Calu3 (cell line): ENCODE measurements at regions of chr1 and their contacts with region 1.

Region 1: GRCh38 chr1:116570358-116571200 is at the start of gene CD58:
- DNase-seq: peak; percentile 82
- H3K4me3 Mint-ChIP-seq: peak within 1 kb of the TSS; percentile 87
- H3K27ac Mint-ChIP-seq: peak within 1 kb of the TSS; percentile 95
- H3K4me1 Mint-ChIP-seq: peaks cover 52% of the 10 kb centered on the region
- H3K27me3 Mint-ChIP-seq: no peaks in the 10 kb centered on the region
- CTCF ChIP-seq: peak; percentile 44
- total RNA-seq, gene CD58: 18.9 and 22.9 TPM in 2 replicates

Region 2: GRCh38 chr1:116504308-116505156 is 66.0 kb before region 1 on chr1:
- CTCF ChIA-PET with region 1: no interaction called
- intact Hi-C with region 1: loop called (anchors 5 kb)
- DNase-seq: peak; percentile 59
- H3K4me3 Mint-ChIP-seq: no peak overlapping the region
- H3K27ac Mint-ChIP-seq: peak overlapping the region; percentile 73
- H3K4me1 Mint-ChIP-seq: peaks cover 57% of the 10 kb centered on the region
- H3K27me3 Mint-ChIP-seq: no peaks in the 10 kb centered on the region
- CTCF ChIP-seq: no peak

Region 3: GRCh38 chr1:116666799-116667574 is 96.4 kb after region 1 on chr1:
- CTCF ChIA-PET with region 1: interaction called, 4 read pairs
- intact Hi-C with region 1: loop called (anchors 1 kb)
- DNase-seq: peak; percentile 6
- H3K4me3 Mint-ChIP-seq: peak overlapping the region; percentile 63
- H3K27ac Mint-ChIP-seq: no peak overlapping the region
- H3K4me1 Mint-ChIP-seq: peaks cover 40% of the 10 kb centered on the region
- H3K27me3 Mint-ChIP-seq: no peaks in the 10 kb centered on the region
- CTCF ChIP-seq: no peak

Region 4: GRCh38 chr1:116724765-116725375 is 154.3 kb after region 1 on chr1:
- CTCF ChIA-PET with region 1: interaction called, 3 read pairs
- intact Hi-C with region 1: loop called (anchors 5 kb)
- DNase-seq: peak; percentile 74
- H3K4me3 Mint-ChIP-seq: no peak overlapping the region
- H3K27ac Mint-ChIP-seq: no peak overlapping the region
- H3K4me1 Mint-ChIP-seq: no peaks in the 10 kb centered on the region
- H3K27me3 Mint-ChIP-seq: peaks cover 35% of the 10 kb centered on the region
- CTCF ChIP-seq: peak; percentile 16

Region 5: DNA sequence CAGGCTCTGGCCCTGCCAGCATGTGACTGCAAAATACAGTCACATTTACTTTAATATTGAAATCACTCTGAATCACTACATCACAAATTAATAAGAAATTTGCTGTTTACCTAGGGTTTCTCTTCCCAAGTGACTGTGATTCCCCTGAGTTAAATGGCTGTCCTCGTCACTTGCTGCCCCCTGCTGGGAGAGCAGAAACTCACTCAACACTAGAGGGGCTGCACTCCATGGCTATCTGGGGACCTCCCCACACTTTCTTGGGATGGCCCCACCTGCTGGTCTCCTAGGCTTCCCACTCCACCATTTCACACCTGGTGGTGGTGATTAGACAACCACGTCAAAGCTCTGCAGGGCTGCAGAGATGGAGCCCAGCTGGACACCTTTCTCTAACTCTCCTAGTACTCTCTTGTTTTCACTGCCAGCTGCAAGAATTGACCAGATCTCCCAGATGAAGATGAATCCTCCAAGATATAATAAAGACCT is 247.0 kb after region 1 on chr1:
- CTCF ChIA-PET with region 1: no interaction called
- intact Hi-C with region 1: loop called (anchors 5 kb)
- DNase-seq: peak; percentile 79
- H3K4me3 Mint-ChIP-seq: no peak overlapping the region
- H3K27ac Mint-ChIP-seq: no peak overlapping the region
- H3K4me1 Mint-ChIP-seq: no peaks in the 10 kb centered on the region
- H3K27me3 Mint-ChIP-seq: no peaks in the 10 kb centered on the region
- CTCF ChIP-seq: peak; percentile 83